ENCODE measurements at regions of chr5 and their contacts with region 1.

Region 1: GRCh38 chr5:175772747-175773533 is 98.4 kb upstream of the CPLX2 start:
- DNase-seq: no peak
- ATAC-seq: no peak
- H3K4me3 ChIP-seq: no peak overlapping the region
- H3K4me3 Mint-ChIP-seq: no peak overlapping the region
- H3K27ac ChIP-seq: no peak overlapping the region
- H3K27ac Mint-ChIP-seq: no peak overlapping the region
- H3K4me1 ChIP-seq: no peaks in the 10 kb centered on the region
- H3K4me1 Mint-ChIP-seq: no peaks in the 10 kb centered on the region
- H3K27me3 ChIP-seq: peaks cover 0 to 7% of the 10 kb centered on the region in 2 experiments
- H3K27me3 Mint-ChIP-seq: peaks cover 29% of the 10 kb centered on the region
- CTCF ChIP-seq: no peak

Region 2: GRCh38 chr5:175805256-175806011 is 32.5 kb after region 1 on chr5:
- CTCF ChIA-PET with region 1: no interaction called
- POLR2A ChIA-PET with region 1: no interaction called
- intact Hi-C with region 1: loop called in 1 of 2 experiments (anchors 1 kb)
- DNase-seq: no peak
- ATAC-seq: no peak
- H3K4me3 ChIP-seq: no peak overlapping the region
- H3K4me3 Mint-ChIP-seq: no peak overlapping the region
- H3K27ac ChIP-seq: no peak overlapping the region
- H3K27ac Mint-ChIP-seq: no peak overlapping the region
- H3K4me1 ChIP-seq: no peaks in the 10 kb centered on the region
- H3K4me1 Mint-ChIP-seq: no peaks in the 10 kb centered on the region
- H3K27me3 ChIP-seq: peaks cover 0 to 3% of the 10 kb centered on the region in 2 experiments
- H3K27me3 Mint-ChIP-seq: peaks cover 61% of the 10 kb centered on the region
- CTCF ChIP-seq: no peak

Region 3: DNA sequence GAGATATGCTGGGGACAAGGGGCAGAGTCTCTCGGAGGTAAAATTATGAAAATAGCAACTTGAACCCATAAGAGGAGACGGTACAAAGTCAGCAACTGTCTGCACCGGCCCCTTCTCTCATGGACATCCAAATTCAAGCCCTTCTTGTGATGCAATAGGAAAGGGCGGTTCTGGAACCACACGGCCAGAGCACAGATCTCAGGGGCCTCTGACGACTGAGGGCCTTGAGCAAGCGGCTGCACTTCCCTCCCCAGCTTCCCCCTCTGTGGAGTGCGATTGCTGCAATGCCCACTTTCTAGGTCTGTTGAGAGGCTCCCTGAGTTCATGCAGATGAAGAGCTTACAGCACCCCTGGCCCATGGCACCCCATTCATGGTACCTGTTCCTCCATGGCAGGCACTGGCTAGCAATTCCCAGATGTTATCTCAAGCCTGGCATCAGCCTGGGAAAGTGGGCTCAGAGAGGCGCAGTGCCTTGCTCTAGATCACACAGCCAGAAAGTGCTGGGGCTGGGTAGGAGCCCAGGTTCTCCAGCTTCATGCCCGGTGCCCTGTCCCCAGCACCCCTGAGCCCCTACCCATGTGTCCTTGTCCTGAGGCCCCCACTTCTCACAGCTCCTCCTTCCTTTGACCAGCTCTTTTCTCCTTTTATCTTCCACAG is 80.8 kb after region 1 on chr5:
- CTCF ChIA-PET with region 1: no interaction called
- POLR2A ChIA-PET with region 1: no interaction called
- intact Hi-C with region 1: no loop called
- DNase-seq: peak in 1 of 9 experiments; percentile 22
- ATAC-seq: no peak
- H3K4me3 ChIP-seq: no peak overlapping the region
- H3K4me3 Mint-ChIP-seq: no peak overlapping the region
- H3K27ac ChIP-seq: no peak overlapping the region
- H3K27ac Mint-ChIP-seq: no peak overlapping the region
- H3K4me1 ChIP-seq: no peaks in the 10 kb centered on the region
- H3K4me1 Mint-ChIP-seq: no peaks in the 10 kb centered on the region
- H3K27me3 ChIP-seq: no peaks in the 10 kb centered on the region
- H3K27me3 Mint-ChIP-seq: no peaks in the 10 kb centered on the region
- CTCF ChIP-seq: no peak